Mammary epithelial cell (primary cell): ENCODE measurements at regions of chr18 and their contacts with region 1.

Region 1: GRCh38 chr18:31819106-31819924 is 58.6 kb upstream of the SLC25A52 start:
- DNase-seq: peak; percentile 37
- H3K4me3 ChIP-seq: no peak overlapping the region
- H3K27ac ChIP-seq: no peak overlapping the region
- H3K4me1 ChIP-seq: no peaks in the 10 kb centered on the region
- H3K27me3 ChIP-seq: no peaks in the 10 kb centered on the region
- CTCF ChIP-seq: peak; percentile 72 to 89

Region 2: GRCh38 chr18:31526374-31526773 is 292.9 kb before region 1 on chr18:
- CTCF ChIA-PET with region 1: no interaction called
- dilution Hi-C with region 1: no loop called
- in situ Hi-C with region 1: no loop called
- intact Hi-C with region 1: no loop called
- DNase-seq: no peak
- H3K4me3 ChIP-seq: no peak overlapping the region
- H3K27ac ChIP-seq: no peak overlapping the region
- H3K4me1 ChIP-seq: no peaks in the 10 kb centered on the region
- H3K27me3 ChIP-seq: no peaks in the 10 kb centered on the region
- CTCF ChIP-seq: no peak

Region 3: DNA sequence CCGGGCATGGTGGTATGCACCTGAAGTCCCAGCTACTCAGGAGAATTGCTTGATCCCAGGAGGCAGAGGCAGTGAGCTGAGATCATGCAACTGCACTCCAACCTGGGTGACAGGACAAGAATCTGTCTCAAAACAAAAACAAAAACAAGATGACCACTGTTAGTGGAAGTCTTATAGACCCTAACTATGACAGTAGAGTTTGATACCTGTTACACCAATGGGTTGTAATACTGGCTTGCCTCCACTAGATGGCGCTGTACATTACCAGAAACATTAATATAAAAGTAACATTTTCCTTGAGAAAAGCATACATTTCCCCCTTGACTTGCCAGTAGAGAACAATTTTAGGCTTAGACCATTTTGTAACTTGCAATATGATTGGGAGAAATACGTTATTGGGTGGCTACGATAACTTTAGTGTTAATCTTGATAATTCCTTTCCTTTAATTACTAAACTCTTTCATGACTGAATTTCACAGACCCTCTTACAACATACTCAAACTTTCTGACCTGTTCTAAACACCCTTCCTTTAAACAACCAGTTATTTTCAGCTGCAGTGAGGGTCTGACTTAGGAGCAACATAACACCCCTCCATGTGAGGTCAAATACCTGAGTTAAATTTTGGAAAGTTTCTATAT is 78.1 kb before region 1 on chr18:
- CTCF ChIA-PET with region 1: no interaction called
- dilution Hi-C with region 1: no loop called
- in situ Hi-C with region 1: no loop called
- intact Hi-C with region 1: loop called (anchors 1 kb)
- DNase-seq: peak; percentile 12
- H3K4me3 ChIP-seq: no peak overlapping the region
- H3K27ac ChIP-seq: no peak overlapping the region
- H3K4me1 ChIP-seq: no peaks in the 10 kb centered on the region
- H3K27me3 ChIP-seq: no peaks in the 10 kb centered on the region
- CTCF ChIP-seq: peak; percentile 75 to 82

Region 4: DNA sequence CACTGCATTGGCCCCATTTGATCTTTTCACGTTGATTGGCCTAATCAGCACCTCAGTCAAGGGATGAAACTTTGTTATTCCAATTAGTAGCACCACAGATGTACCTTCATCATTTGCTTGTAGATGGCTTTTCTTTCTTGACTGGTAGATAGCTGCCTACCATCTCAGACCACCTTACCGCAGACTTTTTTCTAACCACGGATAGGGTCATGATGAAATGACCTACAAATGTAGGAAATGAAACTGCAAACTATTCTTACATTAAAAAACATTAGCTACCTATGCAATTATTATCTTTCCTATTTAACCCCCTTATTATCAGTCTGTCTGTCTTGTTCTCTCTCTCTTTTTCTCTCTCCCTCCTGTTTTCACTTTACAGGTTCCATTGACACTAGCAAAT is 36.3 kb before region 1 on chr18:
- CTCF ChIA-PET with region 1: no interaction called
- dilution Hi-C with region 1: loop called (anchors 5 kb)
- in situ Hi-C with region 1: no loop called
- intact Hi-C with region 1: no loop called
- DNase-seq: no peak
- H3K4me3 ChIP-seq: no peak overlapping the region
- H3K27ac ChIP-seq: no peak overlapping the region
- H3K4me1 ChIP-seq: no peaks in the 10 kb centered on the region
- H3K27me3 ChIP-seq: no peaks in the 10 kb centered on the region
- CTCF ChIP-seq: no peak